Calu3 (cell line): ENCODE measurements at regions of chr5 and their contacts with region 1.

Region 1: DNA sequence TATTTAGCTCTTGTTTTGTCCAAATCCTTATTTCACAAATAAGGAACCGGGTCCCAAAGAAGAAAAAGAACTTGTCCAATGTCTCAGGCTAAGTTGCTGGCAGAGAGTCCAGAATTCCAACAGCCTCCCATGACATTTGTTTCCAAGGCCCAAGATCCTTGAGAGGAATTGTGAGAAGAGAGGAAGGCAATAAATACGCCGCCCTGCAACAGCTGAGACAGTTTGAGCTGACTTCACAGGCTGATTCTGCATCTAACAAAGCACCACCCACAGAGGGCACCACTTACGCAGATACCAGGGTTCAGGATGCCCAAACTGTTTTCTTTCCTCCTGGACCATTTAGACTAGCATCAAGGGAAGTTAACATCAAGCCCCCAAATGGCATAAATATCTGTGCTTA is 211.3 kb downstream of the FAM114A2 start:
- DNase-seq: peak; percentile 4
- H3K4me3 Mint-ChIP-seq: no peak overlapping the region
- H3K27ac Mint-ChIP-seq: no peak overlapping the region
- H3K4me1 Mint-ChIP-seq: no peaks in the 10 kb centered on the region
- H3K27me3 Mint-ChIP-seq: peaks cover 31% of the 10 kb centered on the region
- CTCF ChIP-seq: no peak

Region 2: GRCh38 chr5:153959134-153959957 is 131.9 kb after region 1 on chr5:
- CTCF ChIA-PET with region 1: no interaction called
- intact Hi-C with region 1: loop called (anchors 5 kb)
- DNase-seq: no peak
- H3K4me3 Mint-ChIP-seq: no peak overlapping the region
- H3K27ac Mint-ChIP-seq: no peak overlapping the region
- H3K4me1 Mint-ChIP-seq: no peaks in the 10 kb centered on the region
- H3K27me3 Mint-ChIP-seq: peaks cover 56% of the 10 kb centered on the region
- CTCF ChIP-seq: no peak

Region 3: DNA sequence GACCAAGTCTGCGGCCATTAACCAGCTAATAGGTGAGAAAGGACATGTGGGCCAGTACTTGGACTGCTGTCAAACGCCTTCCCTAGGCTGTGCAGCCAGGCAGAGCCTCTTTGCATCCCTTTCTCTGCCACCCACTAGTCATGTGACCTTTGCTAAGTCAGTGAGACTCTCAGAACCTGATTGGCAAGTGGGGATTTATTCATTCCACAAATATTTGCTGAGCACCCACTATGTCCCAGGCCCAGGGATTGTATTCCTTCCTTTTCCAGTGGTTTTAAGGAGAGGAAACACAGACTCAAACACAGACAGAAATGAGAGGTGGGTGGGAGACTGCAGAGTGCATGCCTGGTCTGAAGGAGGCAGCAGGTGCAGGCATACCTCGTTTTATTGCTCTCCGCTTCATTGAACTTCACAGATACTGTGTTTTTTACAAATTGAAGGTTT is 291.5 kb after region 1 on chr5:
- CTCF ChIA-PET with region 1: no interaction called
- intact Hi-C with region 1: no loop called
- DNase-seq: peak; percentile 35
- H3K4me3 Mint-ChIP-seq: no peak overlapping the region
- H3K27ac Mint-ChIP-seq: no peak overlapping the region
- H3K4me1 Mint-ChIP-seq: no peaks in the 10 kb centered on the region
- H3K27me3 Mint-ChIP-seq: peaks cover 67% of the 10 kb centered on the region
- CTCF ChIP-seq: no peak